HEK293T (cell line): ENCODE measurements at regions of chr13 and their contacts with region 1.

Region 1: GRCh38 chr13:81639984-81640582 is 1299.2 kb upstream of the SPRY2 start:
- DNase-seq: peak; percentile 64

Region 2: DNA sequence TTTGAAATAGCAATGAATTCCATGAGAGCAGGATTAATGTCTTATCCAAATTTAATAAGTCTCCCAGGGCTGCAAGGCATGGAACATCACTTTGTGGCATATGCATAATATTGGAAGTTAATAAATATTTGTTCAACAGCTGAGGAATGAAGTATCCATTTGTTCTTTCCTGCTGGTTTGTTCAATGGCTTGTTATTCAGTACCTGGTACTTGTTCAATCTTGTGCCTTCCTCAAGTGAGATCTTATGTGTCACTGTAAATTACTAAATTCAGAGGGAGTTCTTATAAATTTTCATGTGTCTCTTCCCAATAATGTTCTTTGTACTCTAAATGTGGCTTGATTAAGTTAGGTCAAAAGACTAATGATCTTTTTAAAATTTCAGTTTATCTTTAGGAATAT is 193.6 kb before region 1 on chr13:
- CTCF ChIA-PET with region 1: no interaction called
- POLR2A ChIA-PET with region 1: no interaction called
- DNase-seq: no peak

Region 3: DNA sequence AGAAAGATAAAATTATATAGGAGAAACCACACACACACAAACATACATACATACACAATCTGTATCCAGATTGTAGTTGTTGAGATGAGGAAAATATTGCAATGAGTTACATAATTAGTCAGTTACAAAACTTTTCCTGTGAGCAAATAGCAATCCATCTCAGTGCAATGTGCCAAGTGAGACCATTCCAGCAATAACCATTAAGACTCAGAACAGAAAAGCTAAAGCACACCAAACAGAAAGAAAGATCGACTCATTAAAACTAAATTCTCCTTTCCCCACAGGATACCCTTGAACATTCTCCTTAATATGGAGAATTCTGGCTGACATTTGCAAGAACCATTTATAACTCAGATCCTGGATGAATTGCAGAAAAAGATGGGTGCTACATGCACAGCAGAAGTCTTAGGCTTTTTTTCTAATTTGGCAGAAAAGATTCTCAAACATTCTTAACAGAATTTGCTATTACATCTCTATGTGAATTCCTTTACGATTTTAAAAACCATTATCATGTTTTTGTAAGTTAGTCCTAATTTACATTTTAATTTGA is 42.1 kb after region 1 on chr13:
- CTCF ChIA-PET with region 1: no interaction called
- POLR2A ChIA-PET with region 1: no interaction called
- DNase-seq: no peak

Region 4: DNA sequence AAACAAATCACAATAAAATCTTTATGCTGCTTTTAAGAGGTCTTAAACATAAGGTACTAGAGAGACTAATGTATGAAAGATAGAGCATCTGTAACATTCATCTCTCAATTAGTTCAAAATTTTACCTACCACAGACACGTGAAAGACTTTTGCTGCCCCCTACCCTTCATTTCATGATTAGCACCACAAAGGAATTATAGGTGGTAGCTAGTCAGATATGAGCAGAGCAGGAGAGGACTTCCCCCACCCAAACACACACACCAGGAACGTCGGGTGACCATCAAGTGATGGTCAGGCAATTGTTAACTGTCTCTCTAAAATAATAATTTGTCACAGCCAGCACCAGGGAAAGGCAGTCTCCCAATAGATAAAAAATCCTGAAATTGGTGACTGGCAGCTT is 232.5 kb after region 1 on chr13:
- CTCF ChIA-PET with region 1: interaction called, 18 read pairs
- POLR2A ChIA-PET with region 1: no interaction called
- DNase-seq: peak; percentile 44

Region 5: GRCh38 chr13:82010780-82011179 is 370.7 kb after region 1 on chr13:
- CTCF ChIA-PET with region 1: no interaction called
- POLR2A ChIA-PET with region 1: no interaction called
- DNase-seq: no peak